ENCODE measurements at regions of chr12 and their contacts with region 1.

Region 1: DNA sequence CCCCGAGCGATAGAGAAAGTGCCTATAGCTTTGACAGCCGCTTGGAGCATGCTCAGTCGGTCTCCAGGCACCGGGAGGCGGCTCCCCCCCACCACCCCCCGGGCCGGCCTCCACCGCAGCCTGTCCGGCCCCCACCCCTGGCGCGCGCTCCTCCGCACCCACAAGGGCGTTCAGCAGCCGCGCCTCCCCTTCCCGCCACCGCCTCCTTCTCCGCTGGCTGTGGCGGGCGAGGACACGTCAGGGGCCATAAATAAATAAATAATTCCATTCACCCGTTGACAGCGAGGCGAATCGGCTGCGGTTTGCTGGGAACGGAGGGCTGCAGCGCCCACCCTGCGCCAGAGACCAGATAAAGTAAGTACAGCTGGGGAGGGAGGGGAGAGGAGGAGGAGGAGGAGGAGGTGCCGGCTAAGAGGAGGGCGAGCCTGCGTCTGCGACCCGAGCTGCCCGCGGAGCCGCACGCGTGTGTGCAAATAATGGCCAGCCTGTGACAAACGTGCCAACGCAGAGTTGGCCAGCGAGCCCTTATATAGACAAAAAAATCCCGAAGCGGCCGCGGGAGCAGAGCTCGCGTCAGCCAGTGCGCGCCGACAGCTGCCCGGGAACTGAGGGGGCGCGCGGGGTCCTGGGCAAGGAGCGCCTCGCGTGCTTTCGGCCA is at the start of gene SLC16A7:
- DNase-seq: peak; percentile 66 to 80 (median 79)
- H3K4me3 ChIP-seq: peak within 1 kb of the TSS; percentile 64 to 98 (median 91)
- H3K4me3 Mint-ChIP-seq: peak within 1 kb of the TSS; percentile 92 to 96
- H3K27ac ChIP-seq: peak within 1 kb of the TSS; percentile 93 to 95
- H3K27ac Mint-ChIP-seq: peak within 1 kb of the TSS; percentile 91 to 99 (median 98)
- H3K4me1 ChIP-seq: peaks cover 49 to 60% of the 10 kb centered on the region in 2 donors
- H3K4me1 Mint-ChIP-seq: peaks cover 47% of the 10 kb centered on the region
- H3K27me3 ChIP-seq: no peaks in the 10 kb centered on the region
- H3K27me3 Mint-ChIP-seq: peaks cover 0 to 1% (median 0%) of the 10 kb centered on the region in 3 donors
- CTCF ChIP-seq: no peak
- polyA plus RNA-seq, gene SLC16A7: 6.9 to 16.9 (median 11.8) TPM

Region 2: GRCh38 chr12:59626377-59626776 is 30.4 kb after region 1 on chr12:
- intact Hi-C with region 1: no loop called
- DNase-seq: no peak
- H3K4me3 ChIP-seq: no peak overlapping the region
- H3K4me3 Mint-ChIP-seq: no peak overlapping the region
- H3K27ac ChIP-seq: no peak overlapping the region
- H3K27ac Mint-ChIP-seq: no peak overlapping the region
- H3K4me1 ChIP-seq: peaks cover 0 to under 1% of the 10 kb centered on the region in 2 donors
- H3K4me1 Mint-ChIP-seq: no peaks in the 10 kb centered on the region
- H3K27me3 ChIP-seq: no peaks in the 10 kb centered on the region
- H3K27me3 Mint-ChIP-seq: no peaks in the 10 kb centered on the region
- CTCF ChIP-seq: no peak

Region 3: DNA sequence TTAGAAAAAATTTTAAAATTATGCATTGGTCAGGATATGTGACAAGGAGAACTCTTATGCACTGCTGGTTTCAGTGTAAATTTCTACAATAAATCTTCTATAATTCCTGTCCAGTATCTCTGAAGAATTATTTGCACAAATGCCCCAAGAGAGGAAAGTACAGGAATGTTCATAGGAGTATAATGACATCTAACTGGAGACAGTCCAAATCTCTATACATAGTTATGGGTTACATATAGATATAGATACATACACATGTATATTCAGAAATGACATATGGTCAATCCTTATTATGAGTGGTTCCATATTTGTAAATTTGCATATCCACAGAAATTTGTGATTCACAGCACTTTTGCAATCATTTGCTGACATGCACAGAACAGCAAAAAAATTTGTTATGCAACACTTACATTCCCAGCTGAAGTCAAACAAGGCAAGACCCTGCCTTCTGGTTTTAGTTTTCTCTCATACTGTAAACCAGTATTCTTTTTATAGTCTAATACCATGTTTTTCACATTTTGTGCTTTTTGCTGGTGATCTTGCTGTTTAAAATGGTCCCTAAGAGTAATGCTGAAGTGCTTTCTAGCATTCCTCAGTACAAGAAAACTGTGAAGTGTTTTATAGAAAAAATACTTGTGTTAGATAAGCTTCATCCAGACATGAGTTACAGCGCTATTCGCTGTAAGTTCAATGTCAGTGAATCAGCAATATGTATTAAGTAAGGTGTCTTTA is 103.6 kb after region 1 on chr12:
- intact Hi-C with region 1: loop called (anchors 5 kb)
- DNase-seq: peak; percentile 83 to 92 (median 90)
- H3K4me3 ChIP-seq: peak overlapping the region in 2 of 3 experiments; percentile 29
- H3K4me3 Mint-ChIP-seq: peak overlapping the region in 1 of 2 donors; percentile 30
- H3K27ac ChIP-seq: peak overlapping the region in 1 of 2 donors; percentile 93
- H3K27ac Mint-ChIP-seq: peak overlapping the region; percentile 82 to 92 (median 88)
- H3K4me1 ChIP-seq: peaks cover 15 to 21% of the 10 kb centered on the region in 2 donors
- H3K4me1 Mint-ChIP-seq: peaks cover 11% of the 10 kb centered on the region
- H3K27me3 ChIP-seq: no peaks in the 10 kb centered on the region
- H3K27me3 Mint-ChIP-seq: no peaks in the 10 kb centered on the region
- CTCF ChIP-seq: no peak